Esophagus muscularis mucosa (tissue), 4 donors: ENCODE measurements at regions of chr4 and their contacts with region 1.

Region 1: DNA sequence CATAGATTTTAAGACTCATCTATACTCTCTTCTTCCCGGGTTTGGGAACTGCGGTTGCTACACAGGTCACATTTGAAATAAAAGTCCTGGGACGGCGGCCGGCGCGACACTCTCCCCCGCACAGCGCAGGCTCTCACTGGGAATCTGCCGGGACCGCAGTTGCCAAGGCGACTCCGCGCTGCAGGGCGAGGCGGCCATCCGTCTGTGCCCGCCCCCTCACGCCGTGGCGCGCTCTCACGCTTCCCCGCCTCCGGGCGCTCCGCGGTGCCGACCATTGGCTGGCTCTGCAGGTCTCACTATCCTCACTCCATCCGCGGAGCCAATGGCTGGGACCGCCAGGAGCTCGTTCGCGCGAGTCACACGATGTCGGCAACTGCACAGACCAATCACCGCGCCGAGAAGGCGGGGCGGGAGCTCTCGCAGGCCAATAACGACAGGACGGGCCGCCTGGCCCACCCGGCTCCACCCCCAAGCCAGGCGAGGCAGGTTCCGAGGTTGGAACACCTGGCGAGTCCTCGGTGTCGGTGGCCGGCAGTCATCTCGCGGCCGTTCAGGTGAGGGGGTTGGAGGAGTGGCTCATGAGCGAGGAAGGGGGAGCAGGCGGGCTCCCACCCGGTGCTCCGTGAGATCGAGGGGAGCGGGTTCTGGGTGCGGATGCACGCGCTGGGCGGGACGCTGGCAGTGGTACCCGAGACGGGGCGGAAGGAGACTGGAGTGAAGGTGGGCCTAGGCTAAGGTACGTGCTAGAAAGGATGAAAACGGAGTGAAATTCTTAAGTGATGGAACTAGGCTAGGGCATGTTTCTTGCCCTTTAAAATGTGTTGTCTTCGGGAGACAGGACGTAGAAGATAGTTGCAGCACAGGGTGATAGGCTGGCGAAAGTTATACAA is at the start of gene MSMO1:
- DNase-seq: peak; percentile 100
- H3K4me3 ChIP-seq: peak within 1 kb of the TSS; percentile 62 to 96 (median 83)
- H3K27ac ChIP-seq: peak within 1 kb of the TSS; percentile 67 to 86 (median 80)
- H3K4me1 ChIP-seq: peaks cover 9 to 29% (median 19%) of the 10 kb centered on the region in 4 donors
- H3K27me3 ChIP-seq: no peaks in the 10 kb centered on the region
- CTCF ChIP-seq: peak in 1 of 3 experiments; percentile 3
- EP300 ChIP-seq: no peak
- POLR2A ChIP-seq: no peak
- total RNA-seq, gene MSMO1: 10.8 to 17.4 (median 12.4) TPM

Region 2: DNA sequence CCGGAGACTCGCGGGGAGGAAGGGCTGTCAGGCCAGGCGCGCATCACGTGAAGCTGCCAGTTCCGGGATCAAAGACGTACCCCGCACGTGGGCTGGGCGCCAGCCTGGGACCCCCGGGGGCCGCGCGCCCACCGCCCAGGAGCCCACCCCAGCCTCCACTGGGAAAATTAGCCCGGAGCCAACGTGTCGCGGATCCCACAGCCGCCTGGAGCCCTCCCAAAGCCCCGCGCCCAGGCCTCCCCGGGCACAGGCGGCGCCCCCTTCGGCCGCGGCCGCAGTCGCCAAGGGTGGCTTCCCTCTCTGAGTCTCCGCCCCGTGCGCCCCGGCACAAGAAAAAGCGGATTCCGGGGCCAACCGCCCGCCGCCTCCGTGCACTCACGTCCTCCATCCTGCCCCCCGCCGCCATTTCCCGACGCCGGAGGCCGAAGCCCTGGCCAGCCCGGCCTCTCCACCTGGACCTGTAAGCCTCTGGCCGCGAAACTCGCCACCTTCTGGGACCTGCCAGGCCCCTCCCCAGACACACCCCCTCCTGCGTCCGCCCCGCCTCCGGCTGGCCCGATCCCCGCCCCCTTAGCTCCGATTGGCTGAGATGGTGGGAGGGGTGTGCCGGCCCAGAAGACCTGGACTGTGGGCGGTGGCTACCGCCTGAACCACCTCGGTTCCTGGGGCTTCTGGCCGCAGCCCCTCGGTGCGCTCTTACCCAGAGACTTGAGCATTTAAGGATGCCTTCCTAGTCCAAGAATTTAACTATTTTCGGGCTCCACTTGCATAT is 214.9 kb before region 1 on chr4 and contains the start of gene TMEM192:
- intact Hi-C with region 1: loop called (anchors 5 kb)
- DNase-seq: peak; percentile 99
- H3K4me3 ChIP-seq: peak within 1 kb of the TSS; percentile 75 to 98 (median 91)
- H3K27ac ChIP-seq: peak within 1 kb of the TSS; percentile 85 to 91 (median 90)
- H3K4me1 ChIP-seq: peaks cover 9 to 20% (median 17%) of the 10 kb centered on the region in 4 donors
- H3K27me3 ChIP-seq: no peaks in the 10 kb centered on the region
- CTCF ChIP-seq: peak in 1 of 3 experiments; percentile 44
- EP300 ChIP-seq: no peak
- POLR2A ChIP-seq: no peak
- total RNA-seq, gene TMEM192: 11.6 to 19.1 (median 14.1) TPM

Region 3: GRCh38 chr4:165207431-165208220 is 119.8 kb before region 1 on chr4 and contains the start of gene KLHL2:
- intact Hi-C with region 1: loop called (anchors 1 kb)
- DNase-seq: no peak
- H3K4me3 ChIP-seq: peak within 1 kb of the TSS; percentile 81 to 98 (median 96)
- H3K27ac ChIP-seq: peak within 1 kb of the TSS; percentile 85 to 94 (median 91)
- H3K4me1 ChIP-seq: peaks cover 12 to 32% (median 27%) of the 10 kb centered on the region in 4 donors
- H3K27me3 ChIP-seq: no peaks in the 10 kb centered on the region
- CTCF ChIP-seq: no peak
- EP300 ChIP-seq: no peak
- POLR2A ChIP-seq: no peak
- total RNA-seq, gene KLHL2: 23.5 to 35.3 (median 27.2) TPM